ENCODE measurements at regions of chr1 and their contacts with region 1.

Region 1: DNA sequence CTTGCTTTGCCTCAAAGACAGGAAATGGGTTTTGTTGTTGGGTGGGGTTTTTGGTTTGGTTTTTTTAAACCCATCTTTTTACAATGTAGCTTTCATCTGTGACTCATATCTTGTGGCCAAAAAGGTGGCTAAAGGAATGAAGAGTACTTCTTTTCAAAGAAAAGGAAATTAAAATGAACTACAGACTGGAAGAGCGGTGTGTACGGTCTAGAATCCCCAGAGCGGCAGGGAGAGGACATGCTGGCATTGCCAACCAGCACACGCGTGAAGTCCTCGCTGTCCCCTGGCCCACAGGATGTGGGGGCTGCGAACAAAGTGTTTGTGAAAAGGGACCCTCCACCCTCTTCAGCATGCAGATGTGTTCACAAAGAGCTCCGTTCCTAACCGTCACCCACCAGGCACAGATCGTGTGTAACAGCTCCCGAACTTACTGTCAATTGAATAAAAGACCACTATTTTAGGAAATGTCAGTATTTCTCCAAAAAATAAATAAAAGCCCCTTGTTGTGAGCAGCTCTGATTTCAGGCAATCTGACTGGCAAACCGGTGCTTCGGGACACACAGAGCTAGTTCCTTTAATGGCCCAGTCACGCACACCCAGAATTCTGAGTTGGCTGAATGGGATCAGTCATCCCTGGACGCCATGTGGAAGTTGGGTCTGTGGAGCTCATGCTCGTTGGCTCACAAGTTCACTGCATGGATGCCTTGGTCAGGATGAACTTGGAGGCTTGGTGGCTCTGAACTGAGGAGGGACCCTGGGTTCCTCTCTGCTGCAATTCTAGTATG is 602.9 kb downstream of the NPHP4 start:
- DNase-seq: peak; percentile 45 to 80 (median 76)
- H3K4me3 ChIP-seq: peak overlapping the region; percentile 0 to 20
- H3K4me3 Mint-ChIP-seq: peak overlapping the region in 7 of 8 donors; percentile 64 to 89 (median 79)
- H3K27ac ChIP-seq: peak overlapping the region; percentile 33
- H3K27ac Mint-ChIP-seq: peak overlapping the region in 4 of 7 donors; percentile 88 to 97 (median 95)
- H3K4me1 ChIP-seq: peaks cover 51% of the 10 kb centered on the region
- H3K4me1 Mint-ChIP-seq: peaks cover 13 to 25% (median 24%) of the 10 kb centered on the region in 4 donors
- H3K27me3 ChIP-seq: no peaks in the 10 kb centered on the region
- H3K27me3 Mint-ChIP-seq: no peaks in the 10 kb centered on the region

Region 2: DNA sequence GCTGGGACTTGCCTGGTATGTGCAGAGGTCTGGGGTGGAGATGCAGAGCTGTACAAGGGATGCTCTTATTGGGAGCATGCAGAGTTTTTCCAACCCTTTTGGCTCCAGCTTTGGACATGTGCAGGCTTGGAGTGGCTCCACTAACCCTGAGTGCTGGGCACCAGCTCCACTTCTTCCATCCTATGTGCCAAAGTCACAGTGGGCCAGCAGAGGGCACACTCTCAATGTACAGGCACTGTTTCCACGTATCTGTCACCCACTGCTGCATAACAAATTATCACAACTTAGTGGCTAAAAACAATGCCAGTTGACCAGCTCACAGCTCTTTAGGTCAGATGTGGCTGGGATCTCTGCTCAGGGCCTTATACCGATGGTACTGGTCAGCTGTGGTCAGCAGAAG is 103.0 kb before region 1 on chr1:
- CTCF ChIA-PET with region 1: interaction called, 19 read pairs
- POLR2A ChIA-PET with region 1: interaction called, 7 read pairs
- intact Hi-C with region 1: loop called (anchors 1 kb)
- DNase-seq: peak; percentile 11 to 41 (median 27)
- H3K4me3 ChIP-seq: no peak overlapping the region
- H3K4me3 Mint-ChIP-seq: no peak overlapping the region
- H3K27ac ChIP-seq: no peak overlapping the region
- H3K27ac Mint-ChIP-seq: peak overlapping the region in 3 of 7 donors; percentile 4 to 63 (median 14)
- H3K4me1 ChIP-seq: no peaks in the 10 kb centered on the region
- H3K4me1 Mint-ChIP-seq: peaks cover 0 to 12% (median 4%) of the 10 kb centered on the region in 4 donors
- H3K27me3 ChIP-seq: no peaks in the 10 kb centered on the region
- H3K27me3 Mint-ChIP-seq: no peaks in the 10 kb centered on the region

Region 3: GRCh38 chr1:5329068-5329739 is 60.1 kb before region 1 on chr1:
- CTCF ChIA-PET with region 1: no interaction called
- POLR2A ChIA-PET with region 1: interaction called, 6 read pairs
- intact Hi-C with region 1: loop called (anchors 1 kb)
- DNase-seq: peak in 4 of 5 donors; percentile 9 to 20 (median 16)
- H3K4me3 ChIP-seq: peak overlapping the region in 1 of 2 donors; percentile 12
- H3K4me3 Mint-ChIP-seq: peak overlapping the region; percentile 56 to 84 (median 69)
- H3K27ac ChIP-seq: peak overlapping the region; percentile 44
- H3K27ac Mint-ChIP-seq: peak overlapping the region; percentile 83 to 98 (median 95)
- H3K4me1 ChIP-seq: peaks cover 37% of the 10 kb centered on the region
- H3K4me1 Mint-ChIP-seq: peaks cover 31 to 68% (median 45%) of the 10 kb centered on the region in 4 donors
- H3K27me3 ChIP-seq: no peaks in the 10 kb centered on the region
- H3K27me3 Mint-ChIP-seq: peaks cover 0 to 2% of the 10 kb centered on the region in 2 donors

Region 4: GRCh38 chr1:5370311-5370710 is 19.0 kb before region 1 on chr1:
- CTCF ChIA-PET with region 1: interaction called, 3 read pairs
- POLR2A ChIA-PET with region 1: interaction called, 22 read pairs
- intact Hi-C with region 1: no loop called
- DNase-seq: peak in 4 of 5 donors; percentile 4 to 15 (median 10)
- H3K4me3 ChIP-seq: peak overlapping the region in 1 of 2 donors; percentile 13
- H3K4me3 Mint-ChIP-seq: peak overlapping the region in 7 of 8 donors; percentile 11 to 74 (median 58)
- H3K27ac ChIP-seq: no peak overlapping the region
- H3K27ac Mint-ChIP-seq: peak overlapping the region in 5 of 7 donors; percentile 42 to 74 (median 70)
- H3K4me1 ChIP-seq: peaks cover 26% of the 10 kb centered on the region
- H3K4me1 Mint-ChIP-seq: peaks cover 19 to 27% (median 23%) of the 10 kb centered on the region in 4 donors
- H3K27me3 ChIP-seq: no peaks in the 10 kb centered on the region
- H3K27me3 Mint-ChIP-seq: no peaks in the 10 kb centered on the region

Region 5: GRCh38 chr1:5423109-5423508 is 33.8 kb after region 1 on chr1:
- CTCF ChIA-PET with region 1: no interaction called
- POLR2A ChIA-PET with region 1: interaction called, 11 read pairs
- intact Hi-C with region 1: loop called (anchors 1 kb)
- DNase-seq: peak in 4 of 5 donors; percentile 24 to 35 (median 31)
- H3K4me3 ChIP-seq: peak overlapping the region in 1 of 2 donors; percentile 41
- H3K4me3 Mint-ChIP-seq: peak overlapping the region in 7 of 8 donors; percentile 51 to 73 (median 66)
- H3K27ac ChIP-seq: no peak overlapping the region
- H3K27ac Mint-ChIP-seq: peak overlapping the region in 5 of 7 donors; percentile 42 to 79 (median 61)
- H3K4me1 ChIP-seq: peaks cover 29% of the 10 kb centered on the region
- H3K4me1 Mint-ChIP-seq: peaks cover 13 to 36% (median 26%) of the 10 kb centered on the region in 4 donors
- H3K27me3 ChIP-seq: no peaks in the 10 kb centered on the region
- H3K27me3 Mint-ChIP-seq: peaks cover 2 to 6% of the 10 kb centered on the region in 2 donors